ENCODE measurements at regions of chr16 and their contacts with region 1.

Region 1: GRCh38 chr16:22782314-22782713 is 31.6 kb upstream of the HS3ST2 start:
- DNase-seq: no peak
- ATAC-seq: no peak
- H3K4me3 ChIP-seq: no peak overlapping the region
- H3K27ac ChIP-seq: no peak overlapping the region
- H3K4me1 ChIP-seq: no peaks in the 10 kb centered on the region
- H3K27me3 ChIP-seq: no peaks in the 10 kb centered on the region
- CTCF ChIP-seq: no peak

Region 2: GRCh38 chr16:22734368-22734767 is 47.9 kb before region 1 on chr16:
- intact Hi-C with region 1: loop called in 1 of 2 experiments (anchors 5 kb)
- DNase-seq: no peak
- ATAC-seq: peak in 2 of 4 donors; percentile 56 to 58
- H3K4me3 ChIP-seq: no peak overlapping the region
- H3K27ac ChIP-seq: no peak overlapping the region
- H3K4me1 ChIP-seq: peaks cover 22% of the 10 kb centered on the region
- H3K27me3 ChIP-seq: no peaks in the 10 kb centered on the region
- CTCF ChIP-seq: no peak

Region 3: GRCh38 chr16:23195366-23195978 is 413.2 kb after region 1 on chr16:
- intact Hi-C with region 1: no loop called
- DNase-seq: no peak
- ATAC-seq: no peak
- H3K4me3 ChIP-seq: no peak overlapping the region
- H3K27ac ChIP-seq: no peak overlapping the region
- H3K4me1 ChIP-seq: peaks cover 9% of the 10 kb centered on the region
- H3K27me3 ChIP-seq: no peaks in the 10 kb centered on the region
- CTCF ChIP-seq: no peak

Measured in psoas muscle (tissue), 8 donors.